GM12878 (cell line): ENCODE measurements at regions of chr5 and their contacts with region 1.

Region 1: GRCh38 chr5:115579747-115580173 is 22.5 kb downstream of the TICAM2 start:
- DNase-seq: peak; percentile 77
- ATAC-seq: peak; percentile 81
- H3K4me3 ChIP-seq: no peak overlapping the region
- H3K27ac ChIP-seq: peak overlapping the region; percentile 85
- H3K4me1 ChIP-seq: peaks cover 44% of the 10 kb centered on the region
- H3K27me3 ChIP-seq: no peaks in the 10 kb centered on the region
- CTCF ChIP-seq: no peak
- EP300 ChIP-seq: peak; percentile 60 to 63; a peak in 2 of 4 replicates
- POLR2A ChIP-seq: no peak
- RAD21 ChIP-seq: no peak

Region 2: DNA sequence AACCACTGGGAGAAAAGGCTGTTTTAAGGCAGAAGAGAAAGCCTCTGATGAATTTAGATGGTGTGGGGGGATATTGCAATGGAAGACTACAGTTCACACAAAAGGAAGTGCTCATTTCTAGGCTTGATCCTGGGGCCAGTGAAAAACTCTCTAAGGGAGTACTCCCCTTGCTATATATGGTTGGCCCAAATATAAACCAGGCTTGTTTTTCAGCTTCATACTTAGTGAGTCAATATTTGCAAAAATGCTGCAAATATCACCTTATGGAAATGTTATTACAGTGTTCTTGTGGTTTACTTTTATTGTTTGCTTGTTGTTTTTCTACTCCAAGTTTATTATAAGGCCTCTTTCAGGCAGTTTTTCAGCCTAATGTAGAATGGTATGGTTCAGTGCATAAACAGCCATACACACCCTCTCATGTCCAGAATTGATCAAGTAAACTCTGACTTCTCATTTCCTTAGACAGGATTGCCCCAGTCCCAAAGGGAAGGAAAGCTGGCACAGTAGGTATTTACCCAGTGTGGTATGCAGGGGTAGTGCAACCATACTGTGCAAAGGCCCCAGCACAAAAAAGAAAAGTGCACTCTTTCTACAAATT is 150.3 kb before region 1 on chr5:
- CTCF ChIA-PET with region 1: no interaction called
- POLR2A ChIA-PET with region 1: no interaction called
- RAD21 ChIA-PET with region 1: no interaction called
- SMC1A ChIA-PET with region 1: no interaction called
- in situ Hi-C with region 1: no loop called
- intact Hi-C with region 1: no loop called
- DNase-seq: no peak
- ATAC-seq: no peak; the same call in 2 of the 3 replicates
- H3K4me3 ChIP-seq: no peak overlapping the region
- H3K27ac ChIP-seq: no peak overlapping the region
- H3K4me1 ChIP-seq: no peaks in the 10 kb centered on the region
- H3K27me3 ChIP-seq: no peaks in the 10 kb centered on the region
- CTCF ChIP-seq: no peak
- EP300 ChIP-seq: no peak
- POLR2A ChIP-seq: no peak
- RAD21 ChIP-seq: no peak

Region 3: DNA sequence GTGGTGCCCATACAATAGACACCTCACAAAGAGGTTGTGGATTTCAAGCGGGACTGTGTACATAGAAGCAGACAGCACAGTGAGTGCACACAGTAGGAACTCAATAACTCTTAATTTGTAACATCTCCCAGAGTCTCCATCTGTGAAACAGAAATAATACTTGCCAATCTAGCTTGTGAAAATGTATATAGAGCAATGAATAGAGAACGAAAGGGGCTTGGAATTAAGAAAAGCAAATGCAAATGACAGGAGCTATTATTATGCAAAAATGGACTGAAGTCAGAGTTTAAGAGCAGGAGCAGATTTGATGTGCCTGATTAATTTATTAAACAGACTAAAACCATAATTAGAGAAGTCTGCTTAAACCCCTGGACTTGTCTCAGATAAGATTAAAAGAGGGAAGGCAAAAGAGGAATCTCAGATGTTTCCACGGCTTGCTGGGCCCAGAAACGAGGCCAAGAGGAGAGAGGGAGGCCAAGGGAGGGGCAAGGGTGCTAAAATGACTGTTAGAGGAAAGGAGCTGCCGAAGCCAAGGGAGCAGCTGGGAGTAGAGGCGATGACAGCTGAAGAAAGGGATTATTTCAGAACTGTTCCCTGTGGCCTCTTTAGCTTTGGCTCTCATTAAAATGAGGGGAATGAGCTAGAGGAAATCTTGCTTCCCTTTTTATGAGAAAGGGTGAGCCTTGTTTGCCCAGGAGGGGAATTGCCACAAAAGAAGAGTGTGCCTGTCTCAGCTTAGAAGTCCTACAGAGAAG is 107.3 kb before region 1 on chr5:
- CTCF ChIA-PET with region 1: no interaction called
- POLR2A ChIA-PET with region 1: no interaction called
- RAD21 ChIA-PET with region 1: no interaction called
- SMC1A ChIA-PET with region 1: no interaction called
- in situ Hi-C with region 1: no loop called
- intact Hi-C with region 1: no loop called
- DNase-seq: no peak
- ATAC-seq: peak; percentile 52
- H3K4me3 ChIP-seq: no peak overlapping the region
- H3K27ac ChIP-seq: no peak overlapping the region
- H3K4me1 ChIP-seq: no peaks in the 10 kb centered on the region
- H3K27me3 ChIP-seq: no peaks in the 10 kb centered on the region
- CTCF ChIP-seq: no peak
- EP300 ChIP-seq: no peak
- POLR2A ChIP-seq: no peak
- RAD21 ChIP-seq: no peak

Region 4: DNA sequence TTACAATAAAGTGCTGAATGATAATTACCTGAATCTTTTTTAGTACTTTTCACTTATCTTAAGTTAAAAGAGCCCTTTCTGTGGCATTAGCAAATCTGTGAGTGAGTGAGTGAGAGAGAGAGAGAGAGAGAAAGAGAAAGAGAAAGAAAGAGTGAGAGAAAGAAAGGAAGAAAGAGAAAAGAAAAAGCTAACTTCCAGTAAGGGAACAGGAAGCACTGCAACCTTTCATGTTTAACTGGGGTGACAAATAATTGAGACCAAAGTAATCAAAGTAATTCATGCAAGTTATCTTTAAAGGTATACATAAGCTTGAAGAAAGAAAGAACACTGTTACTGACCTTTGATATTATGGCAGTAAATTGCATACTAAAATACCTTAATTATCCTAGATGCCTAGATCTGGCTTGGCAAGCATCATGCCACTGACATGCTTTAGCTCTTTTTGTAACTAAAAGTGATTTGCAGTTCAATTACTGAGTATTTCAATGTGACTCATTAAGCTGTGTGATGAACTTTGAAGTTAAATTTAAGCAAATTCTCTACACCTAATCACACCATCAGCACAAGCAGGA is 56.8 kb before region 1 on chr5:
- CTCF ChIA-PET with region 1: interaction called, 3 read pairs
- POLR2A ChIA-PET with region 1: no interaction called
- RAD21 ChIA-PET with region 1: interaction called, 3 read pairs
- SMC1A ChIA-PET with region 1: interaction called, 10 read pairs
- in situ Hi-C with region 1: no loop called
- intact Hi-C with region 1: no loop called
- DNase-seq: no peak
- ATAC-seq: peak; percentile 13; the same call in 2 of the 3 replicates
- H3K4me3 ChIP-seq: no peak overlapping the region
- H3K27ac ChIP-seq: no peak overlapping the region
- H3K4me1 ChIP-seq: no peaks in the 10 kb centered on the region
- H3K27me3 ChIP-seq: no peaks in the 10 kb centered on the region
- CTCF ChIP-seq: no peak
- EP300 ChIP-seq: no peak
- POLR2A ChIP-seq: no peak
- RAD21 ChIP-seq: no peak

Region 5: GRCh38 chr5:115551415-115551814 is 28.3 kb before region 1 on chr5:
- CTCF ChIA-PET with region 1: interaction called, 58 read pairs
- POLR2A ChIA-PET with region 1: interaction called, 5 read pairs
- RAD21 ChIA-PET with region 1: interaction called, 66 read pairs
- SMC1A ChIA-PET with region 1: interaction called, 74 read pairs
- in situ Hi-C with region 1: no loop called
- intact Hi-C with region 1: no loop called
- DNase-seq: no peak
- ATAC-seq: peak; percentile 27
- H3K4me3 ChIP-seq: no peak overlapping the region
- H3K27ac ChIP-seq: no peak overlapping the region
- H3K4me1 ChIP-seq: no peaks in the 10 kb centered on the region
- H3K27me3 ChIP-seq: no peaks in the 10 kb centered on the region
- CTCF ChIP-seq: no peak
- EP300 ChIP-seq: no peak
- POLR2A ChIP-seq: no peak
- RAD21 ChIP-seq: no peak

Region 6: GRCh38 chr5:115557667-115558387 is 21.9 kb before region 1 on chr5:
- CTCF ChIA-PET with region 1: interaction called, 45 read pairs
- POLR2A ChIA-PET with region 1: no interaction called
- RAD21 ChIA-PET with region 1: interaction called, 22 read pairs
- SMC1A ChIA-PET with region 1: interaction called, 42 read pairs
- in situ Hi-C with region 1: no loop called
- intact Hi-C with region 1: no loop called
- DNase-seq: no peak
- ATAC-seq: no peak
- H3K4me3 ChIP-seq: no peak overlapping the region
- H3K27ac ChIP-seq: no peak overlapping the region
- H3K4me1 ChIP-seq: no peaks in the 10 kb centered on the region
- H3K27me3 ChIP-seq: no peaks in the 10 kb centered on the region
- CTCF ChIP-seq: no peak
- EP300 ChIP-seq: no peak
- POLR2A ChIP-seq: no peak
- RAD21 ChIP-seq: no peak

Region 7: GRCh38 chr5:115625579-115626444 is 46.1 kb after region 1 on chr5 and contains the start of gene TMED7:
- CTCF ChIA-PET with region 1: interaction called, 6 read pairs
- POLR2A ChIA-PET with region 1: interaction called, 8 read pairs
- RAD21 ChIA-PET with region 1: interaction called, 4 read pairs
- SMC1A ChIA-PET with region 1: interaction called, 30 read pairs
- in situ Hi-C with region 1: no loop called
- intact Hi-C with region 1: no loop called
- DNase-seq: peak; percentile 95
- ATAC-seq: peak; percentile 93
- H3K4me3 ChIP-seq: peak within 1 kb of the TSS; percentile 91
- H3K27ac ChIP-seq: peak within 1 kb of the TSS; percentile 86
- H3K4me1 ChIP-seq: peaks cover 5% of the 10 kb centered on the region; the same call in 1 of the 2 replicates
- H3K27me3 ChIP-seq: no peaks in the 10 kb centered on the region
- CTCF ChIP-seq: no peak
- EP300 ChIP-seq: peak in 1 of 2 experiments; percentile 48; a peak in 2 of 4 replicates
- POLR2A ChIP-seq: peak; percentile 86
- RAD21 ChIP-seq: no peak
- polyA plus RNA-seq, gene TMED7: 8.0 to 10.3 TPM

Region 8: GRCh38 chr5:115657881-115658233 is 78.1 kb after region 1 on chr5:
- CTCF ChIA-PET with region 1: no interaction called
- POLR2A ChIA-PET with region 1: no interaction called
- RAD21 ChIA-PET with region 1: no interaction called
- SMC1A ChIA-PET with region 1: no interaction called
- in situ Hi-C with region 1: no loop called
- intact Hi-C with region 1: no loop called
- DNase-seq: no peak
- ATAC-seq: no peak
- H3K4me3 ChIP-seq: no peak overlapping the region
- H3K27ac ChIP-seq: no peak overlapping the region
- H3K4me1 ChIP-seq: no peaks in the 10 kb centered on the region
- H3K27me3 ChIP-seq: no peaks in the 10 kb centered on the region
- CTCF ChIP-seq: no peak
- EP300 ChIP-seq: no peak
- POLR2A ChIP-seq: no peak
- RAD21 ChIP-seq: no peak